ENCODE measurements at regions of chr10 and their contacts with region 1.

Region 1: DNA sequence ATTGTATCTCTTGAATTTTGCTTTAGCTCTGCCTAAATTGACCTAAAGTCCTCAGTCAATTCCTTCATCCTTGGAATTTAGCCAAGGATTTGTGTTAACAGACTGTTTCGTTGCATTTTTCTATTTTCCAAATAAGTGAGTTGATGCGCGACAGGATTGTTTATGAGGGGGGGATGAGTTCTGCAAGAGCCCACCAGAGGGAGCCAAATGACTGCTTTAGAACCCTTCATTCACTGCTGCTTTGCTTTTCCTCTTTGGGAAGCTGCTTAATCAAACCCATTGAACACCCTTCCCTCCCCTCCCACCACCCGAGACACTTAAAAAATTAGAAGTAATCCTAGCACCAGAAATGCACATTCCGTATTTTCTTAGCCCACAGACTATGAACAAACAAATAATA is 33.7 kb upstream of the PTF1A start:
- DNase-seq: peak; percentile 30
- H3K4me3 ChIP-seq: no peak overlapping the region
- H3K27ac ChIP-seq: no peak overlapping the region
- H3K27me3 ChIP-seq: peaks cover 4% of the 10 kb centered on the region
- CTCF ChIP-seq: peak; percentile 90

Region 2: DNA sequence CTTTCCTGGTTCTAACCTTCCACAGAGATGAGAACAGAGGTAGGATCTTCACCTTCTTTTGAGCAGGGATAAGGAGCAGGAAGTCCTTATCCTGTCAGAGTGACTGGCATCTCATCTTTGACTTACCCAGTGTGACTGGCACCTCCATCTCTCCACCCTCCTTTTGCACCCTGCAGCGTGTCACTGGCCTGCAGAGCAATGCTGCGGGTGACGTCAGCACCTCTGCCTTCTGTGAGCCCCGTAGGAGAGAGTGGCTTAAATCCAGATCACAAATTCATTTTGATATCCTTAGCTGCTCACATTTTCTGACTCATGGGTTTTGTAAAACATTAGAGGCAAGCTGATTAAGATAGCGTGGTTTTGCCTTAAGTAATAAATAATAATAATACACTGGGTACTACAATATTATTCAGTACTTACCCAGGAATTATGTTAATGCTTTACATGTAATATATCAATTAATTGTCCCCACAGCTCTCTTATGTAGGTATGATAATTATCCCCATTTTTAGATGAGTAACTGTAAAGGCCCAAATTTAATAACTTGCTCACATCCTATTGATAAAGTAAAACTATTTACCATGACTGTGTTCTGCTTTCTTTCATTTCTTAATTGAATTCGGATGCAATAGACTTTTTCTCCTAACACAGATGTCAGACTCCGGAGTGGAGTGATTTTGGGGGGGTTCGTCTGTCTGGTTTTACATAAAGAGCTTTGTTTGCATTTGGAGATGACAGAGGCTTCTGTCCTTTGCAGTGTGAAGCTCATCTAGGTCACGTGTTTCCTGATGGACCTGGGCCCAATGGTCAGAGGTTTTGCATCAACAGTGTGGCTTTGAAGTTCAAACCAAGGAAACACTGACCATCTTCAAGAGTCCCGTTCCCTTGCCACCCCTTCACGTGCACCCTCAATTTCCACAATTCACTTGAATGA is 38.1 kb before region 1 on chr10:
- CTCF ChIA-PET with region 1: interaction called, 10 read pairs
- POLR2A ChIA-PET with region 1: no interaction called
- DNase-seq: no peak
- H3K4me3 ChIP-seq: no peak overlapping the region
- H3K27ac ChIP-seq: no peak overlapping the region
- H3K27me3 ChIP-seq: no peaks in the 10 kb centered on the region
- CTCF ChIP-seq: no peak

Region 3: DNA sequence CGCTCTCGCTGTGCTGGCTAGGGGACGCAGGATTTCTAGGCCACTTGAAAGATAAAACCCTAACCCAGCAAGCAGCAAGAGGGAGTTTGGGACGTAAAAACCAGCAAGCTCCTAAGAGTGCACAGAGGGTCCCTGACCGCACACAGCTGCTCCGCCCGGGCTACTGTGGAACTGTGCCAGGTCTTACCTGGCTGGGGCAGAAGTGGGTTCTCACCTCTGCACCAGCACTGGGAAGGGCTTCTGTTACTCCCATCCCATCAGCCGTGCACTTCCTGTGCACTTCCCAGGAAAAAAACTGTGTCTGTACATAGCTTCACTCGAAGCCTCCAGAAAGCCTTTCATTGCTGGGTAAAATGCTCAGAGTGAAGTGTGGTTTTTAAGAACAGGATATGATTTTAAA is 12.1 kb before region 1 on chr10:
- CTCF ChIA-PET with region 1: interaction called, 13 read pairs
- POLR2A ChIA-PET with region 1: no interaction called
- DNase-seq: no peak
- H3K4me3 ChIP-seq: no peak overlapping the region
- H3K27ac ChIP-seq: no peak overlapping the region
- H3K27me3 ChIP-seq: no peaks in the 10 kb centered on the region
- CTCF ChIP-seq: no peak

Region 4: DNA sequence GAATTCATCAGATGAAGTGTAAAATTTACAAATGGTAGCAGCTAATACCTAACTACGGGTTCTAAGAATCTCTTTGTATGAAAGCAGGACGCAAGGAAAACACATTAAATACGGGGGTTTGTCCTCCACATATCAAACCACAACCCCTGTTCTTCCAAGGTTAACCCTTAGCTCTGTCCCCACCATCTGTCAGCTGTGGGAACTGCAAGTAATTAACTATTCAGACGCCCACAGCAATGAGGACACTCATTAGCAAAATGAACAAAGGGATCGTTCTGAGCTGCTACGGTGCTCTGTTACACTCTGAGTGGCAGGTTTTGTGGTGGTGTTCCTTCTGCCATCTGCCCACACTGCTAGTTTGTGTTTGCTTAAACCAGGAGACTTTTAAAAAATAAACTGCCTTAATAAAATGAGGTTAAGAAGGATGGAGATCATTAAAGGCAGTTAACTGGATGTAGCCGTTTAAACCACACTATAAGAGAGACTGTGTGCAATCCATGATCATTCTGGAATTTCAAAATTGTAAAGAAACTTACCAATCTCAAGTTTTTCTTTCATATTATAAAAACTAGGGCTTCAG is 134.9 kb after region 1 on chr10:
- CTCF ChIA-PET with region 1: interaction called, 52 read pairs
- POLR2A ChIA-PET with region 1: no interaction called
- DNase-seq: no peak
- H3K4me3 ChIP-seq: no peak overlapping the region
- H3K27ac ChIP-seq: no peak overlapping the region
- H3K27me3 ChIP-seq: peaks cover 8% of the 10 kb centered on the region
- CTCF ChIP-seq: peak; percentile 61

Region 5: DNA sequence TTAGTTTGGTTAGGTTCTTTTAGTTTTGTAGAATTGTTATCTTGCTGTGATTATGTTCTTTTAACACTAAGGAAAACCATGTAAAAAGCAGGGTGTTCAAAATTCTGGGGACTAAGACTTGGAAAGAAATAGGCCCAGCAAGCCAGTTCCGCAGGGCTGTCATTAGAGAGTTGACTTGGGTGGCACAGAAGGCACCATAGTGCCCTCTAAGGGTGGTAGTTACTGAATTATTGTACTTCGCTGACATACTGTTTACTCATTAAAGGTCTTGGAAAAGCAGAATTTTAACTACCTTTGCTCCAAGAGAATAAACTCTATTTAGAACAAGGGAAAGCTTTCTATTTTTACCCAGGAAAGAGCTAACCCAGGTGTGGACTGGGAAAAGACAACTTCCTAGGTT is 367.0 kb after region 1 on chr10:
- CTCF ChIA-PET with region 1: interaction called, 28 read pairs
- POLR2A ChIA-PET with region 1: no interaction called
- DNase-seq: no peak
- H3K4me3 ChIP-seq: no peak overlapping the region
- H3K27ac ChIP-seq: no peak overlapping the region
- H3K27me3 ChIP-seq: no peaks in the 10 kb centered on the region
- CTCF ChIP-seq: peak; percentile 38

Region 6: DNA sequence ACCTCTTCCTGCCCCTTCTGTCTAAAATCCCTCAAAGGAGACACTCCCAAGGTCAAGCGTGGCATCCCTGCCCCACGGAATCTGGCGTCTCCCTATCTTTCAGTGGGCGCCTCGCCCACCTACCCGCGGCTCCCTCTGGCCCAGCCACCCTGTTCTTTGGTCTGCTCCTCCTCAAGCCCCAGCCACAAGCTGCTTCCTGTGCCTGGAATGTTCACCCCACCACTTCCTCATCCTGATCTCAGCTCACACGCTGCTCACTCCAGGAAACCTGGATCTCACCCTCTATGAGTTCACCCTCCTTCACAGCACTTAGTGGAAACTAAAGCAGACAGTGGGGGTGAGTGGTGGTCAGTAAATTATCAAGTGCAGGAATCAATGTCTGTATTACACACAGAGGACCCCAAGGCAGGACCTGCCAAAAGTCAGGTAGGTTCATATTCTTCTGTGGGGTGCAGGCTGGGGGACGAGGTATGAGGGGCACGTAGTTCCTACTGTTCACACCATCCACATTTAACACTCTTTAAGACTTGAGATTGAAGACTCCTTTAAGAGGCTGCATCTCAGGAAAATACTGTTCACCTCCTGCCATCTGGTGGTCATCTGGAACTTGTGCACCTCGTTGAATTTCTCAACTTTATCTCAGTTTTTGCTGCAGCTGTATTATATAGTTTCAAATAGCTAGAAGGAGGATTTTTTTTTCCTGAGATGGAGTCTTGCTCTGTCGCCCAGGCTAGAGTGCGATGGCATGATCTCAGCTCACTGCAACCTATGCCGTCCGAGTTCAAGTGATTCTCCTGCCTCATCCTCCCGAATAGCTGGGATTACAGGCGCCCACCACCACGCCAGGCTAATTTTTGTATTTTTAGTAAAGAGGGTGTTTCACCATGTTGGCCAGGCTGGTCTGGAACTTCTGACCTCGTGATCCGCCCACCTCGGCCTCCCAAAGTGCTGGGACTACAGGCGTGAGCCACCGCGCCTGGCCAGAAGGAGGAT is 1398.7 kb after region 1 on chr10:
- CTCF ChIA-PET with region 1: interaction called, 14 read pairs
- POLR2A ChIA-PET with region 1: no interaction called
- DNase-seq: peak; percentile 59
- H3K4me3 ChIP-seq: no peak overlapping the region
- H3K27ac ChIP-seq: no peak overlapping the region
- H3K27me3 ChIP-seq: peaks cover 16% of the 10 kb centered on the region
- CTCF ChIP-seq: peak; percentile 77